Activated T-helper 2 cell treated with anti-CD3 and anti-CD28 coated beads, Interferon-gamma antibody, Interleukin-2, Interleukin-4, amounts not matched to agents 10 μg/mL and 5 μg/mL and 100 μg/mL, durations not matched to agents 14 hours and 24 hours and 36 hours (primary cell): ENCODE measurements at regions of chr9 and their contacts with region 1.

Region 1: GRCh38 chr9:85425153-85425611 is 316.6 kb downstream of the AGTPBP1 start:
- DNase-seq: peak; percentile 43
- H3K4me3 Mint-ChIP-seq: no peak overlapping the region
- H3K27ac Mint-ChIP-seq: no peak overlapping the region
- H3K4me1 Mint-ChIP-seq: peaks cover 5% of the 10 kb centered on the region
- H3K27me3 Mint-ChIP-seq: peaks cover 7% of the 10 kb centered on the region

Region 2: GRCh38 chr9:85600675-85601263 is 175.6 kb after region 1 on chr9:
- intact Hi-C with region 1: loop called (anchors 10 kb)
- DNase-seq: no peak
- H3K4me3 Mint-ChIP-seq: no peak overlapping the region
- H3K27ac Mint-ChIP-seq: no peak overlapping the region
- H3K4me1 Mint-ChIP-seq: peaks cover 21% of the 10 kb centered on the region
- H3K27me3 Mint-ChIP-seq: no peaks in the 10 kb centered on the region